ENCODE measurements at regions of chr5 and their contacts with region 1.

Region 1: DNA sequence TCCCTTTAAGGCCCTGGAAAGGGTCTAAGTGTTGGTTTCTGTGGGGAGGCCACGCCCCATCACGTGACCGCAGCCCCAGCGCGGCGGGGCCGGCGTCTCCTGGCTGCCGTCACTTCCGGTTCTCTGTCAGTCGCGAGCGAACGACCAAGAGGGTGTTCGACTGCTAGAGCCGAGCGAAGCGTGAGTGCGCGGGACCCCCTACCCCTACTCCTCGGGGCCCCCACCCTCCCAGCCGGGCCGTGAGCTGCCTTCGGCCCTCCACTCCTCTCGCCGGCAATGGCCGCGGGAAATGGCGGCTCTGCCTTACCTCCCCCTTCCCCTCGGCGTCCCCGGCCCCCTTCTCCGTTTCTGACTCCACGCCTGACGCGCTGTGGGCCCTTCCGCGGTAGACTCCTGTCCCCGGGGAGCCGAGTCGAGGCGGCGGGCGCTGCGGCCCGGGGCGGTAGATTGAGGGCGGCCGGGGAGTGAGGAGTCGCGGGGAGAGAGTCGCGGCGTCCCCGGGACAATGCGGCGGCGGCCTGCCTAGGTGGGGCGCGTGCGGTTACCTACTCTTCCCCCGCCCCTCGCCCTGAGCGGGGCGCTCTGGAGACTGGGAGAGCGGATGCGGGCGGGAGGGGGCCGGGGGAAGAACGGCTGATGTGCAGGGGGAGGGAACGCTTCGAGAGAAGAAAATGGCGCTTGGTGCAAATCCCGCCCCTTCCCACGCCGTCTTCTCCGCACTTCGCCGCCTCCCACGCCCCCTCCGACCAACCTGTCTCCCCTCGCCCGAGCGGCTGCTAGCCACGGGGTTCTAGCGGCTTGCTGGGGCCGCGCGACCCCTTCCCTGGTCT is at the start of gene SUB1:
- DNase-seq: peak; percentile 92 to 95 (median 93)
- H3K4me3 ChIP-seq: peak within 1 kb of the TSS; percentile 89 to 92
- H3K4me3 Mint-ChIP-seq: peak within 1 kb of the TSS; percentile 90 to 99 (median 96)
- H3K27ac ChIP-seq: peak within 1 kb of the TSS; percentile 97
- H3K27ac Mint-ChIP-seq: peak within 1 kb of the TSS; percentile 90 to 99 (median 97)
- H3K4me1 ChIP-seq: peaks cover 67% of the 10 kb centered on the region
- H3K4me1 Mint-ChIP-seq: peaks cover 46 to 82% (median 61%) of the 10 kb centered on the region in 4 donors
- H3K27me3 ChIP-seq: no peaks in the 10 kb centered on the region
- H3K27me3 Mint-ChIP-seq: no peaks in the 10 kb centered on the region
- total RNA-seq, gene SUB1: 204 to 214 TPM

Region 2: DNA sequence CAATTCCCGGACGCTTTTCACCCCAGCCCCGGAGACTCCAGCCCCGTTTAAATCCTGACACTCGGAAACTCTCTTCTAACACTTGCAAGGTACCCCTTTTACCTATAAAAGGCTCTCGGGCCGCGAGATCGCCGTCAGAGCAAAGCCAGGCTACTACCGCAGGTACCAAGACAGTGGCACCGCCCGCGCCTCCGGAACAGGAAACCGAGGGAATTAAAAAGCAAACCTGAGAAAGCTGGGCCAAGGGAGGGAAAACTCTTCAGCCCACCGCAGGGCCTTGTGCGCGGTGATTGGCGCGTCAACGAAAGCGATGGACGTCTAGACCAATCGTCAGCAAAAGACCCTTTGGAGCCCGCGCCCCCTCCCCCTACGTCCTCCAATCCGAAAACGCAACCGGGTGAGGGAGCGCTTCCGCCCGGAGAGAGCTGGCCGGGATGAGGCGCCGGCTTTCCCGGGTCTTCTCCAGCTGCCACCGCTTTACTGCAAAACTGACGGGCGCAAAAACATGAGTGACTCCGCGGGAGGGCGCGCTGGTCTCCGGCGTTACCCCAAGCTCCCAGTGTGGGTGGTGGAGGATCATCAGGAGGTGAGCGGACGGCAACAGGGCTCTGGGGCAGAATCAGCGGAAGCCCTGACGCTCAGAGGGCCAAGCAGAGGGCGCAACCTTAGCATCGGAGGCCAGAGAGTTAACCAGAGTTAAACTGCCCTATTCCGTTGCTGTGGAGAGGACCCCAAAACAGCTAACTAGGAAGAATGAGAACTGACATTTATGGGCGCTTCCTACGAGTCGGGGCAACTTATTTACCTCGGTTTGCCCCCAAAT is 1053.6 kb before region 1 on chr5 and contains the starts of genes C5orf22 and DROSHA:
- CTCF ChIA-PET with region 1: no interaction called
- POLR2A ChIA-PET with region 1: no interaction called
- intact Hi-C with region 1: loop called (anchors 10 kb)
- DNase-seq: peak; percentile 87 to 93 (median 88)
- H3K4me3 ChIP-seq: peak within 1 kb of the TSS; percentile 90 to 94
- H3K4me3 Mint-ChIP-seq: peak within 1 kb of the TSS; percentile 98 to 100 (median 98)
- H3K27ac ChIP-seq: peak within 1 kb of the TSS; percentile 67
- H3K27ac Mint-ChIP-seq: peak within 1 kb of the TSS; percentile 87 to 99 (median 96)
- H3K4me1 ChIP-seq: peaks cover 48% of the 10 kb centered on the region
- H3K4me1 Mint-ChIP-seq: peaks cover 35 to 76% (median 54%) of the 10 kb centered on the region in 4 donors
- H3K27me3 ChIP-seq: no peaks in the 10 kb centered on the region
- H3K27me3 Mint-ChIP-seq: no peaks in the 10 kb centered on the region
- total RNA-seq, gene C5orf22: 26.9 to 30.9 TPM
- total RNA-seq, gene DROSHA: 76.1 to 92.6 TPM

Region 3: DNA sequence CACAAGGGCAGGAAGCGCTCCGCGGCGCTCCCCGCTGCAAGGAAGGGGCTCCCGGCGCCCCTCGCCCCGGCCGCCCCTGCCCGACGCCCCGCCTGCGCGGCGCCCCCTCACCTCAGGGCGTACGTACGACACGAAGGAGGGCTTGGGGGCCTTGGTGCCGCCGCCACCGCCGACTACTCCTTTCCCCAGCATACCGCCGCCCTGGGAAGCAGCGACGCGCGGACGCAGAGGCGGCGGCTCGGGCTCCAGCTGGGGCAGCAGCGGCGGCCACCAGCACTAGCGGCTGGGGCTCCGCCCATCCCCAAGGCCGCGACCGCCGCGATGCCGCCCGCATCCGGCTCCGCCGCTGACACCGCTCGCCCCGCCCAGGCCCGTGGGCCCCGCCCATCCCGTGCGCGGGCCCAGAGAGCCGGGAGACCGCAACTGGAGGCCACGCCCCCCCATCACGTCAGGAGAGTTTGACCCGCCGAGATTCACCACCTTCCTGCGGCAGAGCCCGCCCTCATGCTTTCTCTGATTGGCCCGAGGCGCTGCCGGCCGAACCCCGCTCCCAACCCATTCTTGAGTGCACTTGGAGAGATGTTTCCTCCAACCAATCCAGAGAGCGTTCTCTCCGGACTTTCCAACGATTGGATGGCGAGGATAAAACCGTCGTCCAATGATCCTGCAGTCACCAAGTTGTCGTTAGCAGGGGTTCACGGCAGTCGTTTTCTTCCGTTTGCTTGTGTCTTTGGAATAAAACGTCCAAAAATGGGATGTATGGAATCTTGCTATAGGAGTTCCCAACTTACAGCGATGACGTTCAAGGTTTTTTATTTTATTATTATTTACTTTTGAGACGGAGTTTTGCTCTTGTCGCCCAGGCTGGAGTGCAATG is 272.8 kb before region 1 on chr5 and contains the start of gene MTMR12:
- CTCF ChIA-PET with region 1: interaction called, 3 read pairs
- POLR2A ChIA-PET with region 1: interaction called, 7 read pairs
- intact Hi-C with region 1: loop called (anchors 1 kb)
- DNase-seq: peak; percentile 99 to 100 (median 100)
- H3K4me3 ChIP-seq: peak within 1 kb of the TSS; percentile 59 to 77
- H3K4me3 Mint-ChIP-seq: peak within 1 kb of the TSS; percentile 91 to 98 (median 94)
- H3K27ac ChIP-seq: peak within 1 kb of the TSS; percentile 67
- H3K27ac Mint-ChIP-seq: peak within 1 kb of the TSS; percentile 93 to 98 (median 97)
- H3K4me1 ChIP-seq: peaks cover 28% of the 10 kb centered on the region
- H3K4me1 Mint-ChIP-seq: peaks cover 24 to 50% (median 33%) of the 10 kb centered on the region in 4 donors
- H3K27me3 ChIP-seq: no peaks in the 10 kb centered on the region
- H3K27me3 Mint-ChIP-seq: no peaks in the 10 kb centered on the region
- total RNA-seq, gene MTMR12: 26.3 to 26.4 TPM

Region 4: DNA sequence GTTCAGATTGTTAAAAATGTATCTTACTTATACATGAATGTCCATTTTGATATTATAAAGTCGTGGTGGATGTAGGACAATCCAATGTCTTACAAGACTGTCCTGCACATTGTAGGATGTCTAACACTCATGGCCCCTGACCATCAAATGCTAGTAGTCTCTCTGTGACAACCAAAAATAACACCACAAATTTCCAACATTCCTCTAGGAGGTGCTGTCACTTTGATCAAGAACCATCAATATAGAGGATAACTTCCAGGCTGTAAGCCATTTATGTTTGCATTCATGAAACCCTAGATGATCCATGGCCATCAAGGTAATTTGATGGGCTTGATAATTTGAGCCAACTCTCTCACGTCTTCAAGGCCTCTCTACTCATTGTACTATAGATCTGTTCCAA is 120.6 kb before region 1 on chr5:
- CTCF ChIA-PET with region 1: interaction called, 11 read pairs
- POLR2A ChIA-PET with region 1: no interaction called
- intact Hi-C with region 1: no loop called
- DNase-seq: no peak
- H3K4me3 ChIP-seq: no peak overlapping the region
- H3K4me3 Mint-ChIP-seq: no peak overlapping the region
- H3K27ac ChIP-seq: no peak overlapping the region
- H3K27ac Mint-ChIP-seq: no peak overlapping the region
- H3K4me1 ChIP-seq: no peaks in the 10 kb centered on the region
- H3K4me1 Mint-ChIP-seq: peaks cover 0 to 3% (median 0%) of the 10 kb centered on the region in 4 donors
- H3K27me3 ChIP-seq: no peaks in the 10 kb centered on the region
- H3K27me3 Mint-ChIP-seq: no peaks in the 10 kb centered on the region

Region 5: DNA sequence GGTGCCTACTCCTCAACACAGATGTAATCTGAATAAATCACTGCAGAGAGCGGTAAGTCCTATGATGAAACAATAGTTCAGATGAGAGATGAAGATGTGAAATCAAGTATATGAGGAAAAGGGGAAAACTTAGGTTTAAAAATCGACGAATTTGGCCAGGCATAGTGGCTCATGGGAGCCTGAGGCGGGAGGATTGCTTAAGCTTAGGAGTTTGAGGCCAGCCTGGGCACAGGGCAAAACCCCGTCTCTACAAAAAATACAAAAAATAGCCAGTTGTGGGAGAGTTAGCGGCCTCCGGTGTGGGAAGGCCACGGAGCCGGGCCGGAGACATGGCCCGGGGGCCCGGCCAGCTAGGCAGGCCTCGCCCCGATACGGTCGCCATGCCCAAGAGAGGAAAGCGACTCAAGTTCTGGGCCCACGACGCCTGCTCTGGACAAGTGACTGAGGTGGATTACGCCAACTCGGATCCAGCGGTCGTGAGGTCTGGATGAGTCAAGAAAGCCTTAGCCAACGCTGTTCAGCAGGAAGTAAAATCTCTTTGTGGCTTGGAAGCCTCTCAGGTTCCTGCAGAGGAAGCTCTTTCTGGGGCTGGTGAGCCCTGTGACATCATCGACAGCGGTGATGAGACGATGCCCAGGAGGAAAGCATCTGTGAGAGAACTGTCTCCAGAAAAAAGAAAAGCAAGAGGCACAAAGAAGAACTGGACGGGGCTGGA is 63.1 kb before region 1 on chr5:
- CTCF ChIA-PET with region 1: interaction called, 12 read pairs
- POLR2A ChIA-PET with region 1: no interaction called
- intact Hi-C with region 1: no loop called
- DNase-seq: peak; percentile 20 to 71 (median 33)
- H3K4me3 ChIP-seq: no peak overlapping the region
- H3K4me3 Mint-ChIP-seq: peak overlapping the region in 3 of 8 donors; percentile 5 to 48 (median 17)
- H3K27ac ChIP-seq: no peak overlapping the region
- H3K27ac Mint-ChIP-seq: peak overlapping the region in 3 of 7 donors; percentile 22 to 92 (median 85)
- H3K4me1 ChIP-seq: peaks cover 15% of the 10 kb centered on the region
- H3K4me1 Mint-ChIP-seq: peaks cover 13 to 21% (median 16%) of the 10 kb centered on the region in 4 donors
- H3K27me3 ChIP-seq: no peaks in the 10 kb centered on the region
- H3K27me3 Mint-ChIP-seq: no peaks in the 10 kb centered on the region

Region 6: GRCh38 chr5:32572778-32573480 is 12.7 kb before region 1 on chr5:
- CTCF ChIA-PET with region 1: interaction called, 13 read pairs
- POLR2A ChIA-PET with region 1: interaction called, 3 read pairs
- intact Hi-C with region 1: no loop called
- DNase-seq: no peak
- H3K4me3 ChIP-seq: no peak overlapping the region
- H3K4me3 Mint-ChIP-seq: no peak overlapping the region
- H3K27ac ChIP-seq: no peak overlapping the region
- H3K27ac Mint-ChIP-seq: no peak overlapping the region
- H3K4me1 ChIP-seq: no peaks in the 10 kb centered on the region
- H3K4me1 Mint-ChIP-seq: peaks cover 0 to 1% (median under 1%) of the 10 kb centered on the region in 4 donors
- H3K27me3 ChIP-seq: no peaks in the 10 kb centered on the region
- H3K27me3 Mint-ChIP-seq: no peaks in the 10 kb centered on the region

Region 7: GRCh38 chr5:32645246-32645645 is 59.6 kb after region 1 on chr5:
- CTCF ChIA-PET with region 1: no interaction called
- POLR2A ChIA-PET with region 1: no interaction called
- intact Hi-C with region 1: no loop called
- DNase-seq: no peak
- H3K4me3 ChIP-seq: no peak overlapping the region
- H3K4me3 Mint-ChIP-seq: no peak overlapping the region
- H3K27ac ChIP-seq: no peak overlapping the region
- H3K27ac Mint-ChIP-seq: no peak overlapping the region
- H3K4me1 ChIP-seq: no peaks in the 10 kb centered on the region
- H3K4me1 Mint-ChIP-seq: peaks cover 0 to 5% (median 2%) of the 10 kb centered on the region in 4 donors
- H3K27me3 ChIP-seq: no peaks in the 10 kb centered on the region
- H3K27me3 Mint-ChIP-seq: peaks cover 2 to 6% of the 10 kb centered on the region in 2 donors